ENCODE measurements at regions of chr5 and their contacts with region 1.

Region 1: DNA sequence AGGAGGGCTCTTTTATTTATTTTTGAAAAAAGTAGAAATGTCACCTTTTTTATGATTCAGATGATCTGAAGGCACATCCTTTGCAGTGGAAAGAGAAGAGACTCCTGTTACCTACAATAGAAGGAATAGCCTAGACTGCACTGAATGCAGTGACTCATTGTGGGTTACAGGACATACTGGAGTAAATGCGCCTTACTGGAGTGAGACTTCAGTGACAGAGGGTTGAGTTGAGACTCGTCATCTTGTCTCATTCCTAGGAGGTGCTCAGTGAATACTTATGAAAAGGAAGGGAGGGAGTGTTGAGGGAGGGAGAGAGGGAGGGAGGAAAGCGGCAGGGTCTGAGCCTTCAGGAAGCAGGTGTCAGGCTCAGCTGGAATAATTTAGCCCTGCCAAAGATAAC is 25.2 kb downstream of the ANKRA2 start:
- DNase-seq: no peak
- H3K4me3 ChIP-seq: no peak overlapping the region
- H3K27ac ChIP-seq: no peak overlapping the region
- H3K4me1 ChIP-seq: no peaks in the 10 kb centered on the region
- H3K27me3 ChIP-seq: no peaks in the 10 kb centered on the region
- CTCF ChIP-seq: no peak
- EP300 ChIP-seq: no peak
- RAD21 ChIP-seq: no peak

Region 2: DNA sequence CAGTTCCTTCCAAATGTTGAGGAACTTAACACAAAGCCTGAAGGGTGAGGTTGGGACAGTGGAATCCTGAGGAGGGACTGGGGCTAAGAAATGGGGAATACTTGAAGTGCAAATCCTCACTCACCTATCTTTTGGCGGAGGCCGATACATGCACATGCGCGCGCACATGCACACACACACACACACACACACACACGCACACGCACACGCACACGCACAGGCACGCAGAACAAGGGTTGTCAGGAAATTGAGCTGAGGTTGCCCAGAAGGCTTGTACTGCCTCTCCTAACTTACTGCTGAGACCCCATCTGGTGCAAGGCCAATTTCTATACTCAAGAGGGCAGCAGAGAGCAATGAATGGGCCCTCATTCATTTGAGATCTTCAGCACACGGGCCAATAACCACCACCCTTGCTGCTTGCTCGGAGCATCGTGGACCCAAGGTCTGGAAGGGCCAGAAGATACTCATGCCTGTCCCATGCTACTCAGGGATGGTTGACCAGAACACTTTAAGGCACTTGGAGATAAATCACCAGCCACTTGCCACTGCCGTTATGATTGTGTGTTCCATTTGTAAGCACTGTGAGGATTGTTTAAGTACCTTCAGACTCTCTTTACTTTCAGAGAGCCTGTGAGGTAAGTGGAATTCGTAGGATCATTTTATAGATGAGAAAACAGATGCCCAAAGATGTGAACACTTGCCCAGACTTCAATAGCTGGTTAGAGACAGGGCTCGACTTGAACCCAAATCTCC is 20.5 kb before region 1 on chr5:
- CTCF ChIA-PET with region 1: interaction called, 100 read pairs
- POLR2A ChIA-PET with region 1: no interaction called
- DNase-seq: peak; percentile 84
- H3K4me3 ChIP-seq: no peak overlapping the region
- H3K27ac ChIP-seq: no peak overlapping the region
- H3K4me1 ChIP-seq: no peaks in the 10 kb centered on the region; a peak in 1 of 4 replicates
- H3K27me3 ChIP-seq: no peaks in the 10 kb centered on the region
- CTCF ChIP-seq: peak; percentile 81
- EP300 ChIP-seq: no peak
- RAD21 ChIP-seq: peak; percentile 87

Region 3: DNA sequence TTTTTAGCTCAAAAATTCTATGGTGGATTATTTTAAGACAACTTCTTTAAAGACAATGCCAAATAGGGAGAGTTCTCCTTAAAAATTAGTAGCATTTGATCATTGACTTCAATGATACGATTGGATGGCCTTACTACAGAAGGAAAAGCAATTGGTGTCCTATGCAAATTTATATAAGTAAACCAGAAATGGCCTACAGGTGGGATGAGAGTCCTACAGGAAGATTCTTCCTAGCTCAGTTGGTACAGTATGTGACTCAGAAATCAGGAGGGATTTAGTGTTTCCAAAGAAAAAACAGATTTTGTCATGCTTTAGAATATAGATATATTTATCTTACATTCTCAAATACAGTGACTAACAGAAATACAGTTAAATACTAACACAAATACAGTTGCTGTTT is 18.8 kb after region 1 on chr5:
- CTCF ChIA-PET with region 1: interaction called, 10 read pairs
- POLR2A ChIA-PET with region 1: no interaction called
- DNase-seq: no peak
- H3K4me3 ChIP-seq: no peak overlapping the region
- H3K27ac ChIP-seq: no peak overlapping the region
- H3K4me1 ChIP-seq: no peaks in the 10 kb centered on the region; a peak in 1 of 4 replicates
- H3K27me3 ChIP-seq: no peaks in the 10 kb centered on the region
- CTCF ChIP-seq: no peak
- EP300 ChIP-seq: no peak
- RAD21 ChIP-seq: no peak

Region 4: DNA sequence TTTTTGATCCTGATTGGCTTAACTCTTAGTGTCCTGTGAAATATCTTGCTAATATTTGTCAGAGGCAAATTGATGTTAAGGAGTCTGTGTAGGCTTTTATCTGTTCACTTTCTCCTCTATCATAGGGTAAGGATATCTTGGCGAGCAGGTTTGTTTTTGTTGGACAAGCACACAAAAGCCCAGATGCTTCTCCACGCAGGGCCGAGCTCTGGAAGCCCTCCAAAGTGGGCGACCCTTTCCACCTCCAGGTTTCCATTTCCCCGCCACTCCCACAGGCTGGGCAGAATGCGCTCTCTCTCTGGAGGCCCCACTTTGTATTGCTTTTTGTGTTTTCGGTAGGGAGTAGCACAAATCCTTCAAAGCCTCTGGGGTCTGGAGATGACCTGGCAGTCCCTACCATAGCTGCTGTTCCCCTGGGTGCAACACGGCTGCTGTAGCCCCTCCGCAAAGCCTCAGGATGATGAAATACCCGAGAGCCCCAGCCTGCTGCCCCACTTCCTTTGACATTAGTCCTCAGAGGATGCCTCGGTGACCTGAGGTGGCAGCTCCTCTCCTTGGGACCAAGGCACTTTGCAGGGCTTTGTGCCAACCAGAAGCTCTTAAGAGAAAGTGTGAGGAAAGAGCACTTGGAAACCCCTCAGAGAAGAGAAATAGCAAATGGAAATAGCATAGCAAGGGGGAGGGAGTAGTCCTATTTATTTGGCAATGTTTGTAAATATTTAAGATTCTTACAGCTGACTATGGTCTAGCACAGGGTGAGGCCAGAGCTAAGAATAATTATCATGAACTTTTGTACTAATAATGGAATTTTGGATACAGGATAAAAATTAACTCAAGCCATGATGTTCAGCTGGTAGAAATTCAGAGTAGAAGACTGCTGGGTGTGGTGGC is 208.6 kb after region 1 on chr5:
- CTCF ChIA-PET with region 1: no interaction called
- POLR2A ChIA-PET with region 1: no interaction called
- DNase-seq: peak; percentile 14
- H3K4me3 ChIP-seq: no peak overlapping the region
- H3K27ac ChIP-seq: no peak overlapping the region
- H3K4me1 ChIP-seq: no peaks in the 10 kb centered on the region; a peak in 1 of 4 replicates
- H3K27me3 ChIP-seq: no peaks in the 10 kb centered on the region
- CTCF ChIP-seq: no peak
- EP300 ChIP-seq: no peak
- RAD21 ChIP-seq: no peak